Activated CD8-positive, alpha-beta T cell treated with anti-CD3 and anti-CD28 coated beads, Interleukin-2, amount 10 ng/mL, durations not matched to agents 7 days and 5 days (primary cell): ENCODE measurements at regions of chr18 and their contacts with region 1.

Region 1: GRCh38 chr18:23918401-23919032 is 96.0 kb upstream of the TTC39C start:
- DNase-seq: peak; percentile 89
- ATAC-seq: peak; percentile 90
- H3K4me3 Mint-ChIP-seq: no peak overlapping the region
- H3K27ac Mint-ChIP-seq: no peak overlapping the region
- H3K4me1 Mint-ChIP-seq: peaks cover 36% of the 10 kb centered on the region
- H3K27me3 Mint-ChIP-seq: peaks cover 17% of the 10 kb centered on the region

Region 2: GRCh38 chr18:23629444-23629946 is 289.0 kb before region 1 on chr18:
- CTCF ChIA-PET with region 1: interaction called, 19 read pairs
- POLR2A ChIA-PET with region 1: no interaction called
- DNase-seq: no peak
- ATAC-seq: peak; percentile 30
- H3K4me3 Mint-ChIP-seq: no peak overlapping the region
- H3K27ac Mint-ChIP-seq: no peak overlapping the region
- H3K4me1 Mint-ChIP-seq: peaks cover 6% of the 10 kb centered on the region
- H3K27me3 Mint-ChIP-seq: peaks cover 18% of the 10 kb centered on the region

Region 3: DNA sequence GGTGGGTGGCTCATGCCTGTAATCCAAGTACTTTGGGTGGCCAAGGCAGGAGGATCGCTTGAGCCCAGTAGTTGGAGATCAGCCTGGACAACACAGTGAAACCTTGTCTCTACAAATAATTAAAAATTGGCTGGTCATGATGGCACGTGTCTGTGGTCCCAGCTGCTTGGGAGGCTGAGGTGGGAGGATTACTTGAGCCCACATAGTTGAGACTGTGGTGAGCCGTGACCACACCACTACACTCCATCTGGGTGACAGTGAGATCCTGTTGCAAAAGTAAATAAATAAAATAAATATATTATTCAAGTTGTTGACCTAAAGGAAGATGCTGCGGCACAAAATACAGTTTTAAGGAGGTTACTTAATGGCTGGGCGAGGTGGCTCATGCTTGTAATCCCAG is 156.6 kb before region 1 on chr18:
- CTCF ChIA-PET with region 1: no interaction called
- POLR2A ChIA-PET with region 1: no interaction called
- DNase-seq: no peak
- ATAC-seq: no peak
- H3K4me3 Mint-ChIP-seq: no peak overlapping the region
- H3K27ac Mint-ChIP-seq: no peak overlapping the region
- H3K4me1 Mint-ChIP-seq: no peaks in the 10 kb centered on the region
- H3K27me3 Mint-ChIP-seq: peaks cover 22% of the 10 kb centered on the region

Region 4: GRCh38 chr18:23837591-23837990 is 80.9 kb before region 1 on chr18:
- CTCF ChIA-PET with region 1: interaction called, 13 read pairs
- POLR2A ChIA-PET with region 1: no interaction called
- DNase-seq: no peak
- ATAC-seq: no peak
- H3K4me3 Mint-ChIP-seq: no peak overlapping the region
- H3K27ac Mint-ChIP-seq: no peak overlapping the region
- H3K4me1 Mint-ChIP-seq: peaks cover 21% of the 10 kb centered on the region
- H3K27me3 Mint-ChIP-seq: no peaks in the 10 kb centered on the region

Region 5: DNA sequence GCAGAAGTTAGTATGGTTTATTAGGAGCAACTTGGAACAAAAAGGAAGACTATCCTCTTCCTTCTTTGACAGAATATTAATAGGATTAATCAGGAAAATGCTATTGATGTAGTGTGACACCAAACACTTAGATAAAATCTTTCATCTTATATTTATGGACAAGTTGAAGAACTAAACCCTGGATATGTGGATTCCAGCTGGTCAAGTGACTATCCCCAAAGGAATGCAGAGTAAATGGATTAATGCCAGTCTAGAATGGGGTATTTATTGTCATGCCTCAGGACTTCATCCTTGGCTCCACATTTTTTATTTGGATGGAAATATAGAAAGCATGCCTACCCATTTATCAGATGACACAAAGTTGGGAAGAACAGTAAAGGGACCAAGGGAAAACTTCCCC is 27.9 kb before region 1 on chr18:
- CTCF ChIA-PET with region 1: interaction called, 17 read pairs
- POLR2A ChIA-PET with region 1: no interaction called
- DNase-seq: no peak
- ATAC-seq: no peak
- H3K4me3 Mint-ChIP-seq: no peak overlapping the region
- H3K27ac Mint-ChIP-seq: no peak overlapping the region
- H3K4me1 Mint-ChIP-seq: peaks cover 16% of the 10 kb centered on the region
- H3K27me3 Mint-ChIP-seq: peaks cover 2% of the 10 kb centered on the region

Region 6: DNA sequence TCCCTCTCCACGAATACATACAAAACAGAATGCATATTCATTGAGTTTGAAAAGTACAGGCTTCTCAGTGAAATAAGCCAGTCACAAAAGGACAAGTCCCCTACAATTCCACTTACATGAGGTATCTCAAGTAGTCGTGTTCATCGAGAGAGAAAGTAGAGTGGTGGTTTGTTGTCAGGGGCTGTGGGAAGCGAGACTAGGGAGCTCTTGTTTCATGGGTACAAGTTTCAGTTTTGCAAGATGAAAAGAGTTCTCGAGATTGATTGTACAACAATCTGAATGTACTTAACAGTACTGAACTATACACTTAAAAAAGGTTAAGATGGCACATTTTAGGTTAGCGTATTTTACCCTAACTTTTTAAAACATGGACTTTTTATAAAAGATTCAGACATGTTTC is 24.6 kb after region 1 on chr18:
- CTCF ChIA-PET with region 1: interaction called, 11 read pairs
- POLR2A ChIA-PET with region 1: no interaction called
- DNase-seq: peak; percentile 71
- ATAC-seq: peak; percentile 81
- H3K4me3 Mint-ChIP-seq: peak overlapping the region; percentile 66
- H3K27ac Mint-ChIP-seq: peak overlapping the region; percentile 85
- H3K4me1 Mint-ChIP-seq: peaks cover 45% of the 10 kb centered on the region
- H3K27me3 Mint-ChIP-seq: peaks cover 3% of the 10 kb centered on the region

Region 7: GRCh38 chr18:24112874-24113615 is 194.5 kb after region 1 on chr18:
- CTCF ChIA-PET with region 1: interaction called, 17 read pairs
- POLR2A ChIA-PET with region 1: no interaction called
- DNase-seq: no peak
- ATAC-seq: no peak
- H3K4me3 Mint-ChIP-seq: no peak overlapping the region
- H3K27ac Mint-ChIP-seq: no peak overlapping the region
- H3K4me1 Mint-ChIP-seq: peaks cover 27% of the 10 kb centered on the region
- H3K27me3 Mint-ChIP-seq: no peaks in the 10 kb centered on the region